HEK293 (cell line): ENCODE measurements at regions of chr1 and their contacts with region 1.

Region 1: GRCh38 chr1:180252638-180253536 is 22.8 kb downstream of the LHX4 start:
- H3K4me3 ChIP-seq: no peak overlapping the region
- H3K27ac ChIP-seq: no peak overlapping the region
- H3K4me1 ChIP-seq: no peaks in the 10 kb centered on the region
- CTCF ChIP-seq: peak; percentile 82

Region 2: GRCh38 chr1:180241716-180242526 is 11.0 kb before region 1 on chr1:
- CTCF ChIA-PET with region 1: interaction called, 23 read pairs
- POLR2A ChIA-PET with region 1: no interaction called
- H3K4me3 ChIP-seq: no peak overlapping the region
- H3K27ac ChIP-seq: no peak overlapping the region
- H3K4me1 ChIP-seq: no peaks in the 10 kb centered on the region
- CTCF ChIP-seq: no peak

Region 3: DNA sequence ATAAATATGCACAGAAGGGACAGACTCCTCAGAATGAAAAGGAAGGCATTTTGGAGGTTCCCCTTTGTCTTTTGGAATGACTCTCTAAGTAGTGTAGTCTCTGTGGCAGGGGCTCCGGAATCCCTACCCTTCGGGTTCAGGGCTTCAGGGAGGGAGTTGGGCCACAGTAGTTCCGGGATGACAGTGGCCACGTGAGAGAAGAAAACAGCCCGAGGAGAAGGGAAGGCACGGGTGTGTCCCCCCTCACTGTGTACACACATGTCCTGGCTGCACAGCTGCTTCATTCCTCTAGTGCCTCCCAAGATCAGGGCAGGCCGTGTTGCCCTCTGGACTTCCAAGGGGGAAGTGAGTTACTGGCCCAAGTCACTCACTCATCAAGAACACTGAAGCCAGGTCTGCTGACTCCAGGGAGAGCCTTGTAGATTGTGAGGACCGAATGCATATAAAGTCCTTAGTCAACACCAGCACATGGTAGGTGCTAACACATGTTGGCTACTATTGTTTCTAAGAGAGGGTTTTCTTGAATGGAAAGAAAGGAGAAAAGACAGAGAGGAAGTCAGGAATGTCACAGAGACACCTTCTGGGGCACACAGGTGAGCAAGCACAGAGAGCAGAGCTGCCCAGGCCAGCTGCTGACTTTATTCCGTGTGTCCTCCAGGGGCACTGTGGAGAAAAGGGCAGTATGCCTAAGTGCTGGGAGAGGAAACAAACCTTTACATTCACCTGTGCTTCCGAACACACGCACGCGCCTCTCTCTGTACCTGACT is 17.1 kb after region 1 on chr1:
- CTCF ChIA-PET with region 1: interaction called, 13 read pairs
- POLR2A ChIA-PET with region 1: no interaction called
- H3K4me3 ChIP-seq: no peak overlapping the region
- H3K27ac ChIP-seq: no peak overlapping the region
- H3K4me1 ChIP-seq: no peaks in the 10 kb centered on the region
- CTCF ChIP-seq: 0 out of 2 replicates have a peak, but pooled peaks have one; percentile 9

Region 4: GRCh38 chr1:180415985-180416633 is 163.2 kb after region 1 on chr1:
- CTCF ChIA-PET with region 1: interaction called, 22 read pairs
- POLR2A ChIA-PET with region 1: no interaction called
- H3K4me3 ChIP-seq: no peak overlapping the region
- H3K27ac ChIP-seq: no peak overlapping the region
- H3K4me1 ChIP-seq: no peaks in the 10 kb centered on the region
- CTCF ChIP-seq: peak; percentile 51; the same call in 1 of the 2 replicates